Sciatic nerve (tissue), 2 donors: ENCODE measurements at regions of chr17 and their contacts with region 1.

Region 1: GRCh38 chr17:27601069-27601975 is 29.7 kb upstream of the LGALS9 start:
- DNase-seq: peak; percentile 94
- ATAC-seq: peak; percentile 61

Region 2: DNA sequence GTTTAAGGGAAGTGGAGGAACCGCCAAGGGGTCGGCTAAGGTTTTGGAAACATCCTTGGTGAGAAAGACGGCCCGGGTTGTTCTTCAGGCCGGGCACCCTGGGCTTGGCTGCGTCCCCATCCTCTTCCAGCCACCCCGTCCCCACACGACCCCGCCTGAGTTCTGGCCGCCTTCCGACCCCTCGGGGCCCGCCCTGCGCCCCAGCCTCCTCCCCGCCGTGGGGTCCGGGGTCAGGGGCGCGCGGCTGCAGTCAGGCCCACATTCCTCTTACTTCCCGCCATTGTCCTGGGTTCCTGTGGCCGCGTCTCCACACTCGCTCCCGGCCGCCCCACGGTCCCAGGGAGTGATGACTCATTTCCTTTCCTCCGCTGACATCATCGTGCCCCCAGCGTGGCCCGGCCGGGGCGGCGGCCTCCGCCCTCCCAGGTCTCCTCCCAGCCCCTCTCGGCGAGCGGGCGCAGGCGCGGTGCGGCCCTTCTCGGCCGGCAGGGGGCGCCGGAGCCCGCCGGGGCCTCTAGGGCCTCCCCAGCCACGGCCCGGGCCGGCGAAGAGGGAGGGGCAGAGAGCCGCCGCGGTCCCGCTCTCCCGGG is 247.8 kb before region 1 on chr17:
- intact Hi-C with region 1: loop called (anchors 2 kb)
- DNase-seq: peak; percentile 96
- ATAC-seq: peak; percentile 97

Region 3: DNA sequence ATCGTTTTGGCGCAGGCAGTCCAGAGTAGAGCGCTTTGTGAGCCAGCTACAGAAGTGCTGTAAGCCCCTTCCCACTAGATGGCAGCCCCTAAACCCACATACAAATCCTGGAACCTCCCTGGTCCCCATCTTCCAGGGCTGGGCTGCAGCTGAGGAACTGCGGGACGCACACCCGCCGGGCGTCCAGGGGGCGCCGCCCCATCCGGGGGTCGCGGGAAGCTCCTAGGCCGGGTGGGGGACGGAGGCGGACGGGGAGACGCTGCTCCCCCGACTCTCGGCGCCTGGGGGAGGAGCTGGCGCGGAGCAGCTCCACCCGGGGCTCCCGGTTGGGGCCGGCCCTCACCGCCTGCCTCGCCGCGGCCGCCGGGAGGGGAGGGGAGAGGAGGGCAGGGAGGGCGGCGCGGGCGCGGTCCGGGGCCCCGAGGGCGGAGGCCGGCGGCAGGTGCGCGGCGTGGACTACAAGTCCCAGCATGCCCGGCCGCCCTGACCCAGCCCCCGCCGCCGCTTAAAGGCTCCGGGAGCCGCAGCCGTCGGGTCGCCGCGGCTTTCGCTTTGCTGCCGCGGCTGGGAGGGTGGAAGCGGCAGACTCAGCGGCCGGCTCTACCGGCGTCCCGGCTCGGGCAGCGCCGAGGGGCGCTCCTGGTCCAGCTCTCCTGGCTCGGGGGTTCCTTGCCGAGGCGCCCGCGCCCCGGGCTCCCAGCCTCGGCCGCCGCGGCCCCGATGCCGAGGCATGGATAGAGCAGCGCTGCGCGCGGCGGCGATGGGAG is 145.2 kb before region 1 on chr17 and contains the start of gene KSR1:
- intact Hi-C with region 1: loop called (anchors 5 kb)
- DNase-seq: peak; percentile 89
- ATAC-seq: peak; percentile 84
- total RNA-seq, gene KSR1: 82.2 TPM

Region 4: DNA sequence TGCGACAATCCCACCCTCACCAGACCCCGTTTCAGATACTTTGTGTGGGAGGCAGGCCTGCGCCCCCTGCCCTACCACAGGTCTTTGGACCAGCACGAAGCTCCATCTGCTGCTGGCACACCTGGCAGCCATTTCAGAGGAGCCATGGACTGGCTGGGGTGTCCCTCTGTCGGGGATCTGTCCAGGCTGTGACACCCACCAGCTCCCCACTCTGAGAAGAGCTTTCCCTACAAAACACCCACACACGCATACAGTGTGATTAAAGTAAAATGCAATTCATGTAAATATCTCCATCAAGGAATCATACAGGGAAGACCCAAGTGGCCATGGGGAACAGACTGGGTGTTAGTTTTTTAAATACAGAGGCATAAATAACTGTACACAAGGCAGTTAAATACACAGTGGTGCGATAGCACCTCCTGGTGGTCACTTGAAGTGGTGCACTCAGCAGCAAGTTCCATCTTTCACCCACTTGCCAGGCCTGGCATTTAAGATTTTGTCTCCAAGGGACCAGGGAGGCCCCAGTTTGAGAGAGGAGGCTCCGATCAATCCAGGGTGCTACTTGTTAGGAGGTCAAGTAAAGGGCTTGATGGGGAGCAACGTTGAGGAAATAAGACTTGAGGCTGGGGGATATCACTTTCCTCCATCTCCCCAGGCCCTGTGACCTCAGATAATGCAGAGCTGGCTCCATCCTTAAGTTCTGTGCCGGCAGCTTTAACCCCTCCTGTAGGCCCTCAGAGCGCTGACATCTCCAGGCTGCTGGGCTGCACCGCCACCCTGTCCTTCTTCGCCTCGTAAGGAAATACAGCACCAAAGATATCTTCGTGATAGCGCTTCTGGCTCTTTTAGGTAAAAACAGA is 155.4 kb after region 1 on chr17:
- intact Hi-C with region 1: loop called (anchors 10 kb)
- DNase-seq: no peak
- ATAC-seq: no peak